ENCODE measurements at regions of chr17 and their contacts with region 1.

Region 1: GRCh38 chr17:69235338-69235930 is 6.8 kb upstream of the ABCA10 start:
- DNase-seq: no peak
- H3K4me3 ChIP-seq: no peak overlapping the region
- CTCF ChIP-seq: peak; percentile 69

Region 2: DNA sequence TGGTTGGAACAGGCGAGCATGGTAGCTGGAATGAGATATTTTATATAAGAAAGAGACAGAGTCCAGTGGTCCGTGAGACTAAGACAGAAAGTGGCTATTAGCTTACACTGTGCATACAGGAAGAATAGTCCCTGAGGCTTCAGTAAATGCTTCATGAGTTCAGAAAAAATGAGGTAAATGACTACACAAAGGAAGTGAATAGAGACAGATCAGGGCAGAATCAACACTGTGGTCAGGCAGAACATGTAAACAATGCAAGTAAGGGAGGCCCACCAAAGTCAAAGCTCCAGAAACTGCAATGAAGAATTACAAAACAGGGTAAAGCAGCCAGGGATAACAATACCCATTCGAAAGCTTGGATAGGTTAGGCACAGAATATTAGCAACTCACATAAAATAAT is 11.6 kb before region 1 on chr17:
- CTCF ChIA-PET with region 1: interaction called, 18 read pairs
- POLR2A ChIA-PET with region 1: no interaction called
- DNase-seq: no peak
- H3K4me3 ChIP-seq: no peak overlapping the region
- CTCF ChIP-seq: no peak

Region 3: GRCh38 chr17:69275751-69276150 is 40.3 kb after region 1 on chr17:
- CTCF ChIA-PET with region 1: no interaction called
- POLR2A ChIA-PET with region 1: no interaction called
- DNase-seq: no peak
- H3K4me3 ChIP-seq: no peak overlapping the region
- CTCF ChIP-seq: no peak

Measured in AG04449 (cell line).